Activated B cell treated with CpG ODN at 0.5 μM for 24 hours (primary cell): ENCODE measurements at regions of chr6 and their contacts with region 1.

Region 1: GRCh38 chr6:142702501-142703460 is 242.2 kb downstream of the HIVEP2 start:
- DNase-seq: peak; percentile 17
- ATAC-seq: peak; percentile 40
- H3K4me3 Mint-ChIP-seq: peak overlapping the region; percentile 13
- H3K27ac Mint-ChIP-seq: peak overlapping the region; percentile 50
- H3K4me1 Mint-ChIP-seq: peaks cover 40% of the 10 kb centered on the region
- H3K27me3 Mint-ChIP-seq: no peaks in the 10 kb centered on the region
- CTCF ChIP-seq: no peak

Region 2: GRCh38 chr6:142592316-142592715 is 110.5 kb before region 1 on chr6:
- CTCF ChIA-PET with region 1: no interaction called
- POLR2A ChIA-PET with region 1: no interaction called
- intact Hi-C with region 1: no loop called
- DNase-seq: no peak
- ATAC-seq: no peak
- H3K4me3 Mint-ChIP-seq: no peak overlapping the region
- H3K27ac Mint-ChIP-seq: no peak overlapping the region
- H3K4me1 Mint-ChIP-seq: no peaks in the 10 kb centered on the region
- H3K27me3 Mint-ChIP-seq: peaks cover 5% of the 10 kb centered on the region
- CTCF ChIP-seq: no peak

Region 3: DNA sequence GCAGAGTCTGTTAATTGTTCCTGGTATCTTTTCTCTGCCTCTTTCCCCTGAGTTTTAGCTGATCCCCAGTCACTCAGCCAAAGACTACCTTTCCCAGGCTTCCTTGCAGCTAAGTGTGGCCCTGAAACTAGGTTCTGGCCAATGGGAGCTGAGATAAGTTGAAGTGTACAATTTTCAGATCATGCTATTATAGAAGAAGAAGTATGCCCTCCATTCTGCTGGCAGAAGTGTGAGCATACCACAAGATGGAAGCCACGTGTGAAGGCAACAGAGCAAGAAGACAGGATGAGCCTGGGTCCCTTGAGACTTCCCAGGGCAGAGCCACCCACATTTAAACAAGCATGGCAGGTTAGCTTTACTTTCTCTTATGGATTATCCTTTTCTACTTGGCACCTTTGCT is 31.0 kb before region 1 on chr6:
- CTCF ChIA-PET with region 1: no interaction called
- POLR2A ChIA-PET with region 1: no interaction called
- intact Hi-C with region 1: no loop called
- DNase-seq: no peak
- ATAC-seq: no peak
- H3K4me3 Mint-ChIP-seq: no peak overlapping the region
- H3K27ac Mint-ChIP-seq: no peak overlapping the region
- H3K4me1 Mint-ChIP-seq: peaks cover 6% of the 10 kb centered on the region
- H3K27me3 Mint-ChIP-seq: peaks cover 5% of the 10 kb centered on the region
- CTCF ChIP-seq: no peak

Region 4: DNA sequence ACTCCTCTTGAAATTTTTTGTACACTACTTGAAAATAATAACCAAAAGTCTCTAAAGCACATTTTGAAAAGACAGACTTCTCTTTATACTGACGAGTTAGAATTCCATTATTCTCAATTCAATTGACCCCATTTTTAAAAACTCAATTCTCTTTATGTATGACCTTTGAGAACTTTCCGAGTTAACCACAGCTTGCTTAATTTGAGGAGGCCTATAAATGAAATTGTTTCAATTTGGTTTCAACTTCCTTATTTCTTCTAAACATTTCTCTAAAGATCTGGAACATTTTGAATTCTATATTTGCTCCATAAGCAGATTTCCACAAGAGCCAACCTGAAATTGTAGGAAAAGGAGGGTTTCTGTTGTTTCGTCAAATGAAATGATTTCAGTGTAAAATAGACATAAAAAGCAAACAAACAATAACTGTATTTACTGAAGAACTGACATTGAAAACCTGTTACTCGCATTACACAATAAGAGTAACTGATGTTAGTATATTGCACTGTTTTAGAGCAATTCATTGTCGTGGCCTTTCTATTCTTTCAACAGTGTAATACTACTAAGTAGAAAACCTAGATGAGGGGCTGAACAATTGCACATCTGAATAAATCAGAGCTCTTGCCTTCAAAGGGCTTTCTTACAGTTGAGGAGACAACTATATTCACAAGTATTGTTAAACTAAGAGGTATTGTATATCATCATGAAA is 18.6 kb after region 1 on chr6:
- CTCF ChIA-PET with region 1: no interaction called
- POLR2A ChIA-PET with region 1: no interaction called
- intact Hi-C with region 1: loop called (anchors 2 kb)
- DNase-seq: no peak
- ATAC-seq: no peak
- H3K4me3 Mint-ChIP-seq: no peak overlapping the region
- H3K27ac Mint-ChIP-seq: no peak overlapping the region
- H3K4me1 Mint-ChIP-seq: peaks cover 17% of the 10 kb centered on the region
- H3K27me3 Mint-ChIP-seq: no peaks in the 10 kb centered on the region
- CTCF ChIP-seq: no peak